Caco-2 (cell line): ENCODE measurements at regions of chr2 and their contacts with region 1.

Region 1: DNA sequence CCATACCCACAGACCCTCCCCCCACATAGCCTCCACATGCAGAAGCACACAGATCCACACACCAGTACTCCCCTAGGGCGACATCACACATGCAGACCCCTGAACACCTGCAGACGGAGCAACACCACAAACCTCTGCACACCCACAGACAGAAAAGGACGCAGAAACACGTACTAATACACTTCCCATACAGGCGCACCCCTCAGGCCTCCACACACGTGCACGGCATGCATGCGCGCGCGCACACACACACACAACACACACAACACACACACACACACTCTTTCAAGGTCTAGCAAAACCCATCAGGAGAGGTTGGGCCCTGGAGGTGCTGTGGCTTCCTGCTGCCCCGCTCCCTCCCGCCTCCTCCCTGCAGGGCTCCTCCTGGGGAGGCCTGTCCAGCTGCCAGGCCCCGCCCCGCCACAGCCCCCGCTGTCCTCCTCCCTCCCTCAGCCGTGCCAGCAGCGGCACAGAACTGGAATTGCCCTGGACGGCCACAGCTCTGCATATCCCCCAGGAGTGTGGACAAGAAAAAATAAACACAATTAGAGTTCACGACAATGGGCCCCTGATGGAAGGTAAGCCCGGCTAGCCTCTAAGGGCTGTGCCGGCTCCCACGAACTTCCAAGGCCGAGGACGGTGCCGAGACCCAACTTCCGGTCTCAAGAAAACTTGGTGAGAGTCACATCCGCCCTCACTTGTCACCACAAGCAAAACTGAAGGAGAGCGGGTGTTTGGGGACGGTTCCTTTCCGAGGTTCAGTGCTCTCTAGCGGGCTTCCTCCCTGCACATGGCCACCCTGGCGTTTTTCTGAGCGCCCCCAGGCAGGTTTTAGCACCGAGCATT is 6.8 kb downstream of the ZFP36L2 start:
- DNase-seq: peak; percentile 91 to 92
- H3K4me3 ChIP-seq: peak overlapping the region; percentile 98
- H3K4me3 Mint-ChIP-seq: peak overlapping the region; percentile 70
- H3K27ac Mint-ChIP-seq: peak overlapping the region; percentile 76
- H3K4me1 ChIP-seq: peaks cover 40% of the 10 kb centered on the region
- H3K4me1 Mint-ChIP-seq: peaks cover 30% of the 10 kb centered on the region
- H3K27me3 ChIP-seq: no peaks in the 10 kb centered on the region
- H3K27me3 Mint-ChIP-seq: no peaks in the 10 kb centered on the region
- CTCF ChIP-seq: no peak

Region 2: GRCh38 chr2:42928692-42929545 is 290.7 kb before region 1 on chr2:
- CTCF ChIA-PET with region 1: no interaction called
- POLR2A ChIA-PET with region 1: no interaction called
- intact Hi-C with region 1: no loop called
- DNase-seq: peak; percentile 65 to 70
- H3K4me3 ChIP-seq: no peak overlapping the region
- H3K4me3 Mint-ChIP-seq: no peak overlapping the region
- H3K27ac Mint-ChIP-seq: peak overlapping the region; percentile 76
- H3K4me1 ChIP-seq: peaks cover 66% of the 10 kb centered on the region
- H3K4me1 Mint-ChIP-seq: peaks cover 53% of the 10 kb centered on the region
- H3K27me3 ChIP-seq: no peaks in the 10 kb centered on the region
- H3K27me3 Mint-ChIP-seq: no peaks in the 10 kb centered on the region
- CTCF ChIP-seq: peak; percentile 38 to 50

Region 3: DNA sequence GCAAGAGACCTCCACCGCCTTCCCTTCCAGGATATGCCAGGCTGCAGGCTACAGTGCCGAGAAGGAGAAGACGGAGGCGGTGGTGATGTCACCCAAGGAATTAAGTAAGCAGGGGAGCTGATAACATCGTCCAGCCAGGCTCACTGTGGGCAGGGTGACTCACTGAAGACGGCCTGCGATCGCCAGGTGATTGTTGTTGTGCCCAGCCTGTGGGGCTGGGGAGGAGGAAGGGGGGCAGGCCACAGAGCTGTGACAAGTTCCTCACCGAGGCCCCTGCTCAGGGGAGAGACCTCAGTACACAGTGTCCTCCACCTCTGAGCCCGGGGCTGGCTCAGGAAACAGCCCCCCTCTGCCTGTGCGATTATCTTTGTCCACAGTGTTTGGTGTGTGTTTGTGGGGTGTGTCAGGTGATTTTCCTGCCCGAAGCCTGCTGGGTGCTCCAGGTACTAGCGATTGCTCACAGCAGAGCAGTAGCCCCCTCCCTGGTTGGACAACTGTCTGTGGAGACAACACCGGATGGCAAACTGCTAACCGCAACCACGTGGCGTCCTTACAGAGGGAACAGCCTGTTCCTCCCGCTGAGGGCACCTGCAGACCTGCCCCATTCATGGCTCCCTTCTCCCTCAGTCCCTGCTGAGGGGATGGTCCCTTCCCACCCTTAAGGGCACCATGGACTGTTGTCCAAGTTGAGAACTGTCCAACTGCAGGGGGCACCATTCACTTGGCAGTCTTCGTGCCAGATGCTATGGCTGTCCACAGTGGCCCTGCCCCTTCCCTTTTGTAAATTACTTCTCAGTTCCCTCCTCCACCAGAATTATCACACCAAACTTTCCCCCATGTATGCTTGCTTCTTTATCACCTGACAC is 88.3 kb before region 1 on chr2:
- CTCF ChIA-PET with region 1: interaction called, 3 read pairs
- POLR2A ChIA-PET with region 1: no interaction called
- intact Hi-C with region 1: loop called (anchors 2 kb)
- DNase-seq: peak; percentile 59 to 65
- H3K4me3 ChIP-seq: no peak overlapping the region
- H3K4me3 Mint-ChIP-seq: no peak overlapping the region
- H3K27ac Mint-ChIP-seq: peak overlapping the region; percentile 51
- H3K4me1 ChIP-seq: peaks cover 50% of the 10 kb centered on the region
- H3K4me1 Mint-ChIP-seq: peaks cover 53% of the 10 kb centered on the region
- H3K27me3 ChIP-seq: no peaks in the 10 kb centered on the region
- H3K27me3 Mint-ChIP-seq: no peaks in the 10 kb centered on the region
- CTCF ChIP-seq: peak in 1 of 2 experiments; percentile 33

Region 4: GRCh38 chr2:43199492-43200481 is 19.8 kb before region 1 on chr2:
- CTCF ChIA-PET with region 1: interaction called, 8 read pairs
- POLR2A ChIA-PET with region 1: interaction called, 3 read pairs
- intact Hi-C with region 1: loop called (anchors 1 kb)
- DNase-seq: peak; percentile 84 to 91
- H3K4me3 ChIP-seq: no peak overlapping the region
- H3K4me3 Mint-ChIP-seq: no peak overlapping the region
- H3K27ac Mint-ChIP-seq: peak overlapping the region; percentile 76
- H3K4me1 ChIP-seq: peaks cover 54% of the 10 kb centered on the region
- H3K4me1 Mint-ChIP-seq: peaks cover 37% of the 10 kb centered on the region
- H3K27me3 ChIP-seq: no peaks in the 10 kb centered on the region
- H3K27me3 Mint-ChIP-seq: no peaks in the 10 kb centered on the region
- CTCF ChIP-seq: peak in 1 of 2 experiments; percentile 4

Region 5: GRCh38 chr2:43293744-43294695 is 74.4 kb after region 1 on chr2:
- CTCF ChIA-PET with region 1: no interaction called
- POLR2A ChIA-PET with region 1: no interaction called
- intact Hi-C with region 1: no loop called
- DNase-seq: peak; percentile 52 to 53
- H3K4me3 ChIP-seq: no peak overlapping the region
- H3K4me3 Mint-ChIP-seq: no peak overlapping the region
- H3K27ac Mint-ChIP-seq: peak overlapping the region; percentile 49
- H3K4me1 ChIP-seq: peaks cover 16% of the 10 kb centered on the region
- H3K4me1 Mint-ChIP-seq: peaks cover 16% of the 10 kb centered on the region
- H3K27me3 ChIP-seq: no peaks in the 10 kb centered on the region
- H3K27me3 Mint-ChIP-seq: no peaks in the 10 kb centered on the region
- CTCF ChIP-seq: no peak